PC-3 (cell line): ENCODE measurements at regions of chr3 and their contacts with region 1.

Region 1: GRCh38 chr3:118618247-118619040 is 416.2 kb downstream of the IGSF11 start:
- DNase-seq: peak; percentile 13
- ATAC-seq: no peak
- H3K4me3 ChIP-seq: no peak overlapping the region
- H3K27ac ChIP-seq: no peak overlapping the region
- H3K4me1 ChIP-seq: no peaks in the 10 kb centered on the region
- H3K27me3 ChIP-seq: no peaks in the 10 kb centered on the region
- CTCF ChIP-seq: no peak

Region 2: DNA sequence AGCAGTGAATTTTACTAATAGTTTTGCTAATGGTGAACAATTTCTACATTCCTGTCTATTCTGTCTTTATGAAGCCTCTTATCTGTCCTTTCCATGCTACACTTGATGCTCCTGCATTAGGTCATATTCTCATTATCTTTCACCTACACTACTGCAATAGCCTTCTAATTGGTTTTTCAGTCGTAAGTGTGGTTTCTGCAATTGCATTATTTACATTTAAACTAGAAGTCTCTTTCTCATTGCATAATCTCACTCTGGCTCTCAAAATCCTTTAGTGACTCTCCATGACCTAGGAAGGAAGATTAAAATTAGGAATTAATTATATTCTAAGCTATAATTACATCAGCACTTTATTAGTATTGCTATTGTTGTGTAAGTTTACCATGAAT is 270.3 kb before region 1 on chr3:
- CTCF ChIA-PET with region 1: interaction called, 13 read pairs
- POLR2A ChIA-PET with region 1: no interaction called
- intact Hi-C with region 1: no loop called
- DNase-seq: no peak
- ATAC-seq: no peak
- H3K4me3 ChIP-seq: no peak overlapping the region
- H3K27ac ChIP-seq: no peak overlapping the region
- H3K4me1 ChIP-seq: no peaks in the 10 kb centered on the region
- H3K27me3 ChIP-seq: no peaks in the 10 kb centered on the region
- CTCF ChIP-seq: no peak